Sigmoid colon (tissue), 7 donors: ENCODE measurements at regions of chr1 and their contacts with region 1.

Region 1: DNA sequence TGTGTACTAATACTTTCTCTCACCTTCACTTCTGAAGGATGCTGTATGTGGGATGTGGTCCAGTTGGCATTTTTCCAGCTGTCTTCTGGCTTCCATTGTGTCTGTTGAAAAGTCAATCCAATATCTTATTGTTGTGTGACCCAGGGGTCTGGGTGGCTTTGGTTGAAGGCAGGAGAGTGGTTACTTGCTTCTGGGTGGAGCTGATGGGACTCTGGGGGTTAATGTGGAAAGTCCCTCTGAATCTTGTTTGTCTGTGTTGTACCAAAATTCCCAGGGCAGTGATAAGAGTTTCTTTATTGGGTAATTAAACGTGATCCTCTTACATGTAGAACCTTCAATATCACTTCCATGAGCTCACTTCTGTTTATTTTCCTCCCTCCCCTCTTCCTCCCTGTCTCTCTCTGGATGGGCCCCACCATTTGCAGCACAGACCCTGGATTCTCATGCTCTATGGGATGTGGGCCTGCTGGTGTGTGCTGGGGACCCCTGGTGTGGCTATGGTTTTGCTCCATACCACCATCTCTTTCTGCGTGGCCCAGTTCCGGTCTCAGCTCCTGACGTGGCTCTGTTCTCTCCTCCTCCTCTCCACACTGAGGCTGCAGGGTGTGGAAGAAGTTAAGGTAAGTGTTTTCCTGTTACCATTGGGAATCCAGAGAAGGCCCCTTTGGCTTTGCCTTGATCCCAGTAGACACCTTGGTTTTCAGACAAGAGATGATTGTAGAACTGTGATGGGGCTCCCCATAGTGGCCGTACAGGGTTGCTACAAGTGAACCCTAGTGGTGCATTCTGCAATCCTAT is 71.5 kb downstream of the HHAT start:
- DNase-seq: peak; percentile 70
- H3K4me3 ChIP-seq: no peak overlapping the region
- H3K27ac ChIP-seq: no peak overlapping the region
- H3K4me1 ChIP-seq: peaks cover 0 to 10% (median 0%) of the 10 kb centered on the region in 4 donors
- H3K27me3 ChIP-seq: no peaks in the 10 kb centered on the region
- CTCF ChIP-seq: peak; percentile 55 to 86 (median 62)
- EP300 ChIP-seq: no peak
- POLR2A ChIP-seq: no peak

Region 2: GRCh38 chr1:210143465-210144062 is 256.7 kb before region 1 on chr1:
- intact Hi-C with region 1: loop called (anchors 5 kb)
- DNase-seq: peak; percentile 83
- H3K4me3 ChIP-seq: no peak overlapping the region
- H3K27ac ChIP-seq: no peak overlapping the region
- H3K4me1 ChIP-seq: no peaks in the 10 kb centered on the region
- H3K27me3 ChIP-seq: no peaks in the 10 kb centered on the region
- CTCF ChIP-seq: peak; percentile 21 to 61 (median 48)
- EP300 ChIP-seq: no peak
- POLR2A ChIP-seq: no peak

Region 3: GRCh38 chr1:210200124-210200736 is 200.0 kb before region 1 on chr1:
- intact Hi-C with region 1: loop called (anchors 5 kb)
- DNase-seq: no peak
- H3K4me3 ChIP-seq: no peak overlapping the region
- H3K27ac ChIP-seq: no peak overlapping the region
- H3K4me1 ChIP-seq: no peaks in the 10 kb centered on the region
- H3K27me3 ChIP-seq: no peaks in the 10 kb centered on the region
- CTCF ChIP-seq: peak in 1 of 4 experiments; percentile 40
- EP300 ChIP-seq: no peak
- POLR2A ChIP-seq: no peak

Region 4: GRCh38 chr1:210328746-210329503 is 71.3 kb before region 1 on chr1 and contains the start of gene HHAT:
- intact Hi-C with region 1: loop called (anchors 10 kb)
- DNase-seq: peak; percentile 87
- H3K4me3 ChIP-seq: peak within 1 kb of the TSS; percentile 67 to 91 (median 84)
- H3K27ac ChIP-seq: peak within 1 kb of the TSS; percentile 89 to 95 (median 94)
- H3K4me1 ChIP-seq: peaks cover 0 to 21% (median 18%) of the 10 kb centered on the region in 4 donors
- H3K27me3 ChIP-seq: no peaks in the 10 kb centered on the region
- CTCF ChIP-seq: peak in 1 of 4 experiments; percentile 28
- EP300 ChIP-seq: no peak
- POLR2A ChIP-seq: no peak
- total RNA-seq, gene HHAT: 2.0 to 6.4 (median 3.6) TPM

Region 5: DNA sequence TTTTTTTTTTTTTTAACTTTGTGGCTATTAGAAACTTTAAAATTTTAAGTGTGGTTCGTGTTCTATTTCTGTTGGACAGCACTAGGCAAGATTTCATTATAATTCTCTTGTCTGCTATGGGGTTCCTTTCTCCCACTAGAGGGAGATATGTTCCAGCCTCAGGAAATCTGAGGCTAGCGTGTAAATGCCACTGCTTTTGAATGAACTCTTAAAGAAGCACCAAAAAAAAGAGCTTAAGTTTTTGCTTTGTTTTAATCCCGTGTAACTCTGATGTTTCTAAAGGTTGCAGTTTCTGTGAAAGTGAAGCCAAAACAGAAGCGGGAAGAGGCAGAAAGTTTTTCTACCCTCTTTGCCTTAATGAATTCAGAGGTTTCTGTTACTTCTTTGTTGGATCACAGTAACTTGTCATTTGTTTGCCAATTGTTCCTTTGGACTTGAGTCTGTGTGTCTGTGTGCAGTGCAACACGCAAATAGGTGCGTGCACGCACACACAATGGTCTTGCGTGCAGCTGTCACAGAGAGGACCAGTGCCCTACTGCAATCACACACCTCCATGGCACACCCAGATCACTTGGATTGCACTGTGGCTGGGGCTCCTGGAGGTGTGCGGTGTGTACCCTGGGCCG is 39.3 kb before region 1 on chr1:
- intact Hi-C with region 1: loop called (anchors 1 kb)
- DNase-seq: no peak
- H3K4me3 ChIP-seq: no peak overlapping the region
- H3K27ac ChIP-seq: no peak overlapping the region
- H3K4me1 ChIP-seq: peaks cover 0 to 33% (median 21%) of the 10 kb centered on the region in 4 donors
- H3K27me3 ChIP-seq: no peaks in the 10 kb centered on the region
- CTCF ChIP-seq: peak in 3 of 4 experiments; percentile 33 to 64 (median 39)
- EP300 ChIP-seq: no peak
- POLR2A ChIP-seq: no peak